Caco-2 (cell line): ENCODE measurements at regions of chr16 and their contacts with region 1.

Region 1: DNA sequence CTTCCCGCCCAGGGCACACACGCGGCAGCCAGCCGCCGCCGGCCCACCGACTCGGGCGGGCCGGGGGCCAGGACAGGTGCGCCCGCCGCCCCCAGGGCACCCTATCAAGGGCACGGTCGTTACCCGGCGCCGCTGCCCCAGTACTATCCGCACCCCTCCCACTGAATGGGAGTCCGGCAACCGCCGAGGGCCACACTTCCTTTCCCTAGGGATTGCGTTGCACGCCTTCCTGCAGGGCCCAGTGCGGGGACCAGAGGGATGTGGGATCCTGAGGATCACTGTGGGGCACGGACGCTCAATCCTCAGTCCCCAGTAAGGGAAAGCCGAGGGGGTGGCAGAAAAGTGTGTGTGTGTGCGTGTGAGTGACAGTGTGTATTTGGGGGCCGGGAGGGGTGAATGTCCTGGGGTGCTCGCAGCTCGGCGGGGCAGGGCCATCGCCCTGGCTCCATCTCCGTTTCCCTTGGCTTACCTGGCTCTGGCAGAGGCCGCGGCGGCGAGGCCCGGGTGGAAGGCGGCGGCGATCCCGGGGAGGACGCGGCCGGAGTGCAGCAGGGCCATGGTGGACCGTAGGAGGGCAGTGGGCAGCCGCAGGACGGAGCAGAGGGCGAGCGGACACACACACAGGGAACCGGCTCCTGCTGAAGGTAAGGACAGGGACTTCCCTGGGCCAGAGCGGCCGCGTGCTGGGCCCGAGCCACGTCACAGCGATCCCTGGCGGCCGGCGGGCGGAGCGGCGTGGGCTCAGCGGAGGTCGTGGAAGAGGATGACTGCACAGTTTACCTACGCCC is at the start of gene GOT2:
- DNase-seq: peak; percentile 89 to 94
- H3K4me3 ChIP-seq: peak within 1 kb of the TSS; percentile 76
- H3K4me3 Mint-ChIP-seq: peak within 1 kb of the TSS; percentile 100
- H3K27ac Mint-ChIP-seq: peak within 1 kb of the TSS; percentile 99
- H3K4me1 ChIP-seq: no peaks in the 10 kb centered on the region; the same call in 1 of the 2 replicates
- H3K4me1 Mint-ChIP-seq: peaks cover 12% of the 10 kb centered on the region
- H3K27me3 ChIP-seq: no peaks in the 10 kb centered on the region
- H3K27me3 Mint-ChIP-seq: no peaks in the 10 kb centered on the region
- CTCF ChIP-seq: peak; percentile 75 to 98
- total RNA-seq, gene GOT2: 150 and 153 TPM in 2 replicates

Region 2: DNA sequence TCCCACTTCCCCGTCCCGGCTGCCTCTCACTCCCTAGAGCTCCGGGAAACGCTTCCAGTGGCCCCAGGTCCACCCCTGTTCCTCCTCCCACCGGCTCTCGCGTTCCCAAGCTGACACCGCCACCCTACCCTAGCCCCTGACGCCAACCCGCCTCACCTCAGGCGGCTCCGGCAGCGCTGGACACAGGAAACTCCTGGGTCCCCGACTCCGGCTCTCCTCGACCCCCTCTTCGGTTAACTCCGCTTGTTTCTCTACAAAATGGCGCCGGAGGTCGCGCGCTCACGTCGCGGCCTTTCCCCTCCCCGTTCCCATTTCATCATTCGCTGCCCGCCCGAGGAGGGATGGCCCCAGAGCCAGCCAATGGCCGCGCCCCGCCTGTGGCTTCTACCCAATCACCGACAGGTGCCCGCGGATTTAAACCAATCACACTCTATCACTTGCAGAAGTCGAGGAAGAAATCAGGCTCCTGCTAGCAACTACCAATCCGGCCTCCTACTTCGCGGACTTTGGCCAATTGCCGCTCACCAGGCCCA is 104.2 kb before region 1 on chr16 and contains the start of gene CNOT1:
- CTCF ChIA-PET with region 1: no interaction called
- POLR2A ChIA-PET with region 1: no interaction called
- intact Hi-C with region 1: loop called (anchors 1 kb)
- DNase-seq: peak; percentile 100
- H3K4me3 ChIP-seq: peak within 1 kb of the TSS; percentile 87
- H3K4me3 Mint-ChIP-seq: peak within 1 kb of the TSS; percentile 92
- H3K27ac Mint-ChIP-seq: peak within 1 kb of the TSS; percentile 99
- H3K4me1 ChIP-seq: peaks cover 6% of the 10 kb centered on the region
- H3K4me1 Mint-ChIP-seq: peaks cover 13% of the 10 kb centered on the region
- H3K27me3 ChIP-seq: no peaks in the 10 kb centered on the region
- H3K27me3 Mint-ChIP-seq: no peaks in the 10 kb centered on the region
- CTCF ChIP-seq: no peak
- total RNA-seq, gene CNOT1: 413 and 417 TPM in 2 replicates

Region 3: GRCh38 chr16:58670177-58670576 is 63.7 kb before region 1 on chr16:
- CTCF ChIA-PET with region 1: no interaction called
- POLR2A ChIA-PET with region 1: interaction called, 10 read pairs
- intact Hi-C with region 1: no loop called
- DNase-seq: no peak
- H3K4me3 ChIP-seq: no peak overlapping the region
- H3K4me3 Mint-ChIP-seq: no peak overlapping the region
- H3K27ac Mint-ChIP-seq: no peak overlapping the region
- H3K4me1 ChIP-seq: no peaks in the 10 kb centered on the region
- H3K4me1 Mint-ChIP-seq: no peaks in the 10 kb centered on the region
- H3K27me3 ChIP-seq: no peaks in the 10 kb centered on the region
- H3K27me3 Mint-ChIP-seq: no peaks in the 10 kb centered on the region
- CTCF ChIP-seq: no peak

Region 4: GRCh38 chr16:58684354-58685083 is 49.3 kb before region 1 on chr16 and contains the start of gene SLC38A7:
- CTCF ChIA-PET with region 1: interaction called, 3 read pairs
- POLR2A ChIA-PET with region 1: no interaction called
- intact Hi-C with region 1: loop called (anchors 2 kb)
- DNase-seq: peak; percentile 89
- H3K4me3 ChIP-seq: peak within 1 kb of the TSS; percentile 89
- H3K4me3 Mint-ChIP-seq: peak within 1 kb of the TSS; percentile 81
- H3K27ac Mint-ChIP-seq: peak within 1 kb of the TSS; percentile 84
- H3K4me1 ChIP-seq: peaks cover 9% of the 10 kb centered on the region
- H3K4me1 Mint-ChIP-seq: peaks cover 7% of the 10 kb centered on the region
- H3K27me3 ChIP-seq: no peaks in the 10 kb centered on the region
- H3K27me3 Mint-ChIP-seq: peaks cover 1% of the 10 kb centered on the region
- CTCF ChIP-seq: no peak
- total RNA-seq, gene SLC38A7: 24.1 and 27.6 TPM in 2 replicates